MCF 10A (cell line): ENCODE measurements at regions of chr2 and their contacts with region 1.

Region 1: DNA sequence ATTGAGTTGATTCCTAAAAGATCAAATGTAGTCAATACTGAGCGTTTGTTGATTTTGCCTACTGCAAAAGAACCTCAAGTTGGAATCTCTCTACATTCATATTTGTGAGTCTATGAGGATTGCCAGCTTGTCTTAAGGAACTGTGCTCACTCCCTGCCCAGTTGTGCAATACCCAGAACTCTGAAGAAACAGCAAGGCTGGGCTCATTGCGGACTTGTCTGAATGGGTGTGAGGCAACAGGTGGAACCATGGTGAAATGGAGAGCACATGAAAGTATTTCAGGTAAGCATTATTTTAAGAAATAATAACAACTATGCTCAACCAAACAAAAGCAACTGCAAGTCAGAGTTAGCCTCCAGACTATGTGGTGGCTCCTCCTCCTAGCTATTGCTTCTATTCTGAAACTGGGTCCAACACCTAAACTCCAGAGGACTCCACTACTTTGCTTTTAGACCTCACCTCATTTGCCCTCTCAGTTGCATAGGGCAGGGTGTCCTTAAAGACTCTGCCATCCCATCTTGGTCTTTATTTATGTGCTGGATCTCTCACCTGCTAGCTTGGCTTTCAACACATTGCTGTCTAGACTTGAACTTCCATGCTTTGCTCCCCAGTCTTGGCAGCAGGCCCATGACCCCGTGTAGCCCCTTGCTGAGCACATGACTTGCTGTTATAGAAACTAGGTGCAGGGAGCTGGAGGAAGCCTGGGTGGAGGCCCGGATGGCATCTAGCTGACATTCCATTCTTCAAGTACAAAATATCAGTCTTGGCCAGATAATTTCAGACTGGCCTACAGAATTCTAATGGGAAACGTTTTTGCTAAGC is 94.8 kb upstream of the ARL5A start:
- DNase-seq: peak; percentile 95
- H3K4me3 Mint-ChIP-seq: peak overlapping the region; percentile 6
- H3K27ac Mint-ChIP-seq: peak overlapping the region; percentile 63
- H3K4me1 Mint-ChIP-seq: peaks cover 33% of the 10 kb centered on the region
- H3K27me3 Mint-ChIP-seq: no peaks in the 10 kb centered on the region
- CTCF ChIP-seq: no peak

Region 2: GRCh38 chr2:151937966-151938365 is 14.9 kb after region 1 on chr2:
- CTCF ChIA-PET with region 1: interaction called, 3 read pairs
- POLR2A ChIA-PET with region 1: interaction called, 26 read pairs
- intact Hi-C with region 1: no loop called
- DNase-seq: no peak
- H3K4me3 Mint-ChIP-seq: no peak overlapping the region
- H3K27ac Mint-ChIP-seq: no peak overlapping the region
- H3K4me1 Mint-ChIP-seq: no peaks in the 10 kb centered on the region
- H3K27me3 Mint-ChIP-seq: no peaks in the 10 kb centered on the region
- CTCF ChIP-seq: no peak

Region 3: GRCh38 chr2:151959238-151959637 is 36.2 kb after region 1 on chr2:
- CTCF ChIA-PET with region 1: no interaction called
- POLR2A ChIA-PET with region 1: interaction called, 13 read pairs
- intact Hi-C with region 1: no loop called
- DNase-seq: peak; percentile 51
- H3K4me3 Mint-ChIP-seq: no peak overlapping the region
- H3K27ac Mint-ChIP-seq: peak overlapping the region; percentile 81
- H3K4me1 Mint-ChIP-seq: peaks cover 16% of the 10 kb centered on the region
- H3K27me3 Mint-ChIP-seq: no peaks in the 10 kb centered on the region
- CTCF ChIP-seq: no peak

Region 4: DNA sequence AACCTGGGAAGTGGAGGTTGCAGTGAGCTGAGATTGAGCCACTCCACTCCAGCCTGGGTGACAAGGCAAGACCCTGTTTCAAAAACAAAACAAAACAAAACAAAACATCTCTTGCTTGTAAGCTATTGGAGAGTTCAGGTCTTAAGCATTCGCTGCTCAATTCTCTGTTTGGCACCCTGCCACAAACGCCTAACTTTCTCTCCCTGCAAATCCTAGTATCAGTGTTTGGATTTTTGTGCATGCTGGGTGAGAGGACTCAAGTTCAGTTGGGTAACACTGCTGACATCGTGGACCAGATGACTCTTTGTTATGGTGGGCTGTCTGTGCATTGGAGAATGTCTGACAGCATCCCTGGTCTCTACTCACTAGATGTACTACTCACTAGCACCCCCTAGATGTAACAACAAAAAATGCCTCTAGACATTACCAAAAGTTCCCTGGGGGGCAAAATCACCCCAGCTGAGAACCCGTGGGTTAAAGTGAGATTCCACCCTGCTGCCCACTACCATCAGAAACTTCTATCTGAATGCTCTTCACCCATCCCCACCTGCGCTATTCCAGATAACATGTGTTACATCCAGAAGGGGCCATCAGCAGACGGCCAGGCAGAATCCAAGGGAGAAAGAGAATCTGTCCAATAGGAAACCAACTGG is 124.9 kb after region 1 on chr2:
- CTCF ChIA-PET with region 1: no interaction called
- POLR2A ChIA-PET with region 1: no interaction called
- intact Hi-C with region 1: no loop called
- DNase-seq: peak; percentile 42
- H3K4me3 Mint-ChIP-seq: no peak overlapping the region
- H3K27ac Mint-ChIP-seq: no peak overlapping the region
- H3K4me1 Mint-ChIP-seq: no peaks in the 10 kb centered on the region
- H3K27me3 Mint-ChIP-seq: peaks cover 47% of the 10 kb centered on the region
- CTCF ChIP-seq: peak; percentile 44

Region 5: GRCh38 chr2:152062125-152063091 is 139.4 kb after region 1 on chr2:
- CTCF ChIA-PET with region 1: no interaction called
- POLR2A ChIA-PET with region 1: no interaction called
- intact Hi-C with region 1: no loop called
- DNase-seq: peak; percentile 45
- H3K4me3 Mint-ChIP-seq: no peak overlapping the region
- H3K27ac Mint-ChIP-seq: no peak overlapping the region
- H3K4me1 Mint-ChIP-seq: peaks cover 8% of the 10 kb centered on the region
- H3K27me3 Mint-ChIP-seq: peaks cover 18% of the 10 kb centered on the region
- CTCF ChIP-seq: no peak